SK-N-SH (cell line): ENCODE measurements at regions of chr10 and their contacts with region 1.

Region 1: DNA sequence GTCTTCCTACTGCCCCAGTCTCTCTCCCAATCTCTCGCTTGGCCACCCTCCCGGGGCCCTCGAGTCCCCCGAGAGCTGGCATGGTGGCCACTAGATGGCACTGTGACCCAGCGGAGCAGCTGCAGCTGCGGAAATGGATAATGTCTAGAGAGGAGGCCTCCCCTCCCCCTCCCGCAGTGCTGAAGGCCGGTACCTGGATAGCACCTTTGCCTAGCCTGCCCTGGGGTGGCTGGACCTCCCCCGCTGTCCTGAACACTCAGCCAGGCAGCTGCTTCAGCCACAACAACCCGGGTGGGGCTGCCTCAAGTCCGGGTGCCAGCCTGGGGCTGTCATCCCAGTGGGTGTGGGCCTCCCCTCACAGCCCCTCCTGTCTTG is 65.2 kb downstream of the GOLGA7B start:
- DNase-seq: peak; percentile 92
- H3K4me3 ChIP-seq: peak overlapping the region in 1 of 2 experiments; percentile 50; a peak in 1 of 4 replicates
- H3K27ac ChIP-seq: no peak overlapping the region
- H3K4me1 ChIP-seq: peaks cover 0 to 6% of the 10 kb centered on the region in 2 experiments; a peak in 1 of 4 replicates
- H3K27me3 ChIP-seq: no peaks in the 10 kb centered on the region; the same call in none of the 2 replicates
- CTCF ChIP-seq: peak; percentile 93
- EP300 ChIP-seq: no peak
- RAD21 ChIP-seq: peak; percentile 93

Region 2: GRCh38 chr10:97771055-97771811 is 143.6 kb before region 1 on chr10:
- CTCF ChIA-PET with region 1: no interaction called
- POLR2A ChIA-PET with region 1: no interaction called
- DNase-seq: peak; percentile 84
- H3K4me3 ChIP-seq: peak overlapping the region in 1 of 2 experiments; percentile 35; a peak in 2 of 4 replicates
- H3K27ac ChIP-seq: no peak overlapping the region
- H3K4me1 ChIP-seq: peaks cover 0 to 4% of the 10 kb centered on the region in 2 experiments; a peak in 1 of 4 replicates
- H3K27me3 ChIP-seq: peaks cover 21% of the 10 kb centered on the region; the same call in 1 of the 2 replicates
- CTCF ChIP-seq: no peak
- EP300 ChIP-seq: no peak
- RAD21 ChIP-seq: no peak

Region 3: GRCh38 chr10:97903128-97904017 is 11.5 kb before region 1 on chr10:
- CTCF ChIA-PET with region 1: interaction called, 55 read pairs
- POLR2A ChIA-PET with region 1: no interaction called
- DNase-seq: no peak
- H3K4me3 ChIP-seq: no peak overlapping the region
- H3K27ac ChIP-seq: no peak overlapping the region
- H3K4me1 ChIP-seq: peaks cover 0 to 12% of the 10 kb centered on the region in 2 experiments; a peak in 1 of 4 replicates
- H3K27me3 ChIP-seq: peaks cover 9% of the 10 kb centered on the region; the same call in 1 of the 2 replicates
- CTCF ChIP-seq: no peak
- EP300 ChIP-seq: no peak
- RAD21 ChIP-seq: no peak; the same call in 1 of the 2 replicates

Region 4: GRCh38 chr10:98006266-98006665 is 91.4 kb after region 1 on chr10:
- CTCF ChIA-PET with region 1: interaction called, 17 read pairs
- POLR2A ChIA-PET with region 1: no interaction called
- DNase-seq: peak; percentile 55
- H3K4me3 ChIP-seq: no peak overlapping the region
- H3K27ac ChIP-seq: no peak overlapping the region
- H3K4me1 ChIP-seq: peaks cover 0 to 4% of the 10 kb centered on the region in 2 experiments; a peak in 2 of 4 replicates
- H3K27me3 ChIP-seq: no peaks in the 10 kb centered on the region
- CTCF ChIP-seq: no peak
- EP300 ChIP-seq: peak in 1 of 2 experiments; percentile 38; a peak in 1 of 4 replicates
- RAD21 ChIP-seq: no peak

Region 5: DNA sequence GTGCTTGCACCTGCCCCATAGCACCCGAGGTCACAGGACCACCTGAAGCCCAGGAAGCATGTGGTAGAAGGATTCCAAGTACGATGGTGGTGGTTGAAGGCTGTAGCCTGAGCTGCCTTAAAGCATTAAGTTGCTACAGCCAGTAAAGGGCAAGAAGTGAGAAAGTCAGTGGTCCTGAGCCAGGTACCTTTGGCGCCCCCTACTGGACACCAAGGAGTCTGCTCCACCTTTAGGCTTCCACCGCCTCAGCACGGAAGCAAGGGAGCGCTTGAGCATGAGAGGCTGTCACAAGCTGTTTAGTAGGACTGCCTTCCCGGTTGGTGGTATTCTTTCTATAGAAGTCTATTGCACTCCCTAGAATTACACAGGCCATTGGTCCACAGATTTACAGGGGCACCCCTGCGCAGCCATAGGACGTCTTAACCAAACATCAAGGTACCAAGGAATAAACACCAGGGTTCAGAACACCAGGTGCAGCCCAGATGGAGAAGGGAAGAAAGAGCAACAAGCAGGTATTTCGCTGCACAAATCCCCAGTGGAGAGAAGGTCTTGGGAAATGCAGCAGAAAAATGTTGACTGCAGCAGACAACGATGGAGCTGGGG is 113.4 kb after region 1 on chr10:
- CTCF ChIA-PET with region 1: interaction called, 38 read pairs
- POLR2A ChIA-PET with region 1: interaction called, 3 read pairs
- DNase-seq: peak; percentile 75
- H3K4me3 ChIP-seq: peak overlapping the region in 1 of 2 experiments; percentile 36; a peak in 1 of 4 replicates
- H3K27ac ChIP-seq: no peak overlapping the region
- H3K4me1 ChIP-seq: peaks cover 0 to 8% of the 10 kb centered on the region in 2 experiments; a peak in 1 of 4 replicates
- H3K27me3 ChIP-seq: peaks cover 27% of the 10 kb centered on the region
- CTCF ChIP-seq: peak; percentile 63
- EP300 ChIP-seq: no peak
- RAD21 ChIP-seq: peak; percentile 53